B cell (primary cell): ENCODE measurements at regions of chr5 and their contacts with region 1.

Region 1: DNA sequence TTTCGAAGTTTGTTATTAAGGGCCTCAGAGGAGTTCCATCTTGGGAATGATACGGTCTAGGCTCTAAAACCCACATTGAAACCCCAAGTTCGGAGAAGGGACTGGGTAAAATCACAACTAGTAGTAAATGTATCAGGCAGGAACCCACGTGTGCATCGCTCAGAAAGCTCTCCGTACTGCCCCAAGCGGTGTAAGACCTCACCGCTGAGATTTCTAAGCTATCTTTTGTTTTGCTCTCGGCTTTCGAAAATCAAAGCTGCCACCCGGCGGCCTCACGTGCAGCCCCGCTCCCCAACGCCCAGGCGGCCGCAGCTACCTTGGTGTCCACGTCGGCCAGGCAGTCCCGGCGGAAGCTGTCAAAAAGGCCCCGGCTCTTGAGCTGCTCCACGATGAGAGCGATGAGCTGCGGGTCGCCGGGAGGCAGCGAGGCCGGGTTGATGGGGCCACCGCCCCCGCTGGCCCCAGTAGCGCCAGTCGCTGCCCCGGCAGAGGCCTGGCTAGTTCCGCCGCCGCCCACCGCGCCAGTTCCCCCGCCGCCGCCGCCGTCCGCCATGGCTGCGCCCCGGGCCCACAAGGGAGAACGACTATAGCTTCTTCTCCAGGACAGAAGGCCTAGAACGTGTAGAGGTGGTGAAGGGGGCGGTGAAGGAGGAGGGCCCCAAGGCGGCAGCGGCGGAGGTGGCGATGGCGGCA is 420 bp downstream of the BOD1 start:
- DNase-seq: peak; percentile 87
- ATAC-seq: peak; percentile 34
- H3K4me3 ChIP-seq: peak overlapping the region; percentile 68 to 89 (median 83)
- H3K4me3 Mint-ChIP-seq: peak overlapping the region; percentile 98
- H3K27ac ChIP-seq: peak overlapping the region; percentile 88 to 96
- H3K27ac Mint-ChIP-seq: peak overlapping the region; percentile 97
- H3K4me1 ChIP-seq: peaks cover 21 to 29% of the 10 kb centered on the region in 2 donors
- H3K4me1 Mint-ChIP-seq: peaks cover 43% of the 10 kb centered on the region
- H3K27me3 ChIP-seq: no peaks in the 10 kb centered on the region
- H3K27me3 Mint-ChIP-seq: no peaks in the 10 kb centered on the region
- CTCF ChIP-seq: peak; percentile 77

Region 2: DNA sequence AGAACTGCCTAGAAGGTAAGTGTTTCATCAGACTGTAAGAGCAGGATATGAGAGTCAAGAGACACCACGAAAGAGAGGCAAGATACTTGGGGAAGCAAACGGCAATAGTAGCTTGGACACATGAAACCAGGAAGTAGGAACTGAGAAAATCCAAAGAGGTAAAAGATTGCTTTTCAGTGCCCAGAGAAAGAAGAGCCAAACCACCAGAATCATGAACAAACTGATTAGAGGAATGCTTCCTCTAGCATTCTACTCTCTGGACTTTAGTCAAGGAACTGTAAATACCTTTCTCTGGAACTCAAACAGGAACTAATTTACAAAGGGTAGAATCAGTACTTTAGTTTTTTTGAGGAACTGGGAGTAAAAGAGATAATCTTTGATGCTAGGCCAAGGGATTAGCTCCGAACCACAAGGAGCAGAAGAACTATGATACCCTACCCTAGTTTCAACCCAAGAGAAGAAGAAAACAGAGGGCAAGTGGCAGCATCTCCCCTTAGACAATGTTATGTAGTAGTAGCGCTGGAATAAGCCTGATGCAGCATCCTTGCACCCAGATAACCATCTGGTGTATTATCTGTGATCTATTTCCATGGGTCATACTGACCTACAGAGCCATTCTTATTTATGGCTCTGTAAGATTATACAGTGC is 1380.8 kb before region 1 on chr5:
- CTCF ChIA-PET with region 1: no interaction called
- POLR2A ChIA-PET with region 1: no interaction called
- intact Hi-C with region 1: no loop called
- DNase-seq: peak; percentile 5
- ATAC-seq: no peak
- H3K4me3 ChIP-seq: no peak overlapping the region
- H3K4me3 Mint-ChIP-seq: no peak overlapping the region
- H3K27ac ChIP-seq: peak overlapping the region in 1 of 2 donors; percentile 3
- H3K27ac Mint-ChIP-seq: no peak overlapping the region
- H3K4me1 ChIP-seq: peaks cover 0 to 7% of the 10 kb centered on the region in 2 donors
- H3K4me1 Mint-ChIP-seq: peaks cover 17% of the 10 kb centered on the region
- H3K27me3 ChIP-seq: no peaks in the 10 kb centered on the region
- H3K27me3 Mint-ChIP-seq: no peaks in the 10 kb centered on the region
- CTCF ChIP-seq: no peak

Region 3: GRCh38 chr5:172764849-172765765 is 850.9 kb before region 1 on chr5:
- CTCF ChIA-PET with region 1: no interaction called
- POLR2A ChIA-PET with region 1: no interaction called
- intact Hi-C with region 1: loop called (anchors 10 kb)
- DNase-seq: peak; percentile 99
- ATAC-seq: peak; percentile 78
- H3K4me3 ChIP-seq: peak overlapping the region; percentile 27 to 74 (median 52)
- H3K4me3 Mint-ChIP-seq: peak overlapping the region; percentile 83
- H3K27ac ChIP-seq: peak overlapping the region; percentile 92 to 94
- H3K27ac Mint-ChIP-seq: peak overlapping the region; percentile 94
- H3K4me1 ChIP-seq: peaks cover 33 to 42% of the 10 kb centered on the region in 2 donors
- H3K4me1 Mint-ChIP-seq: peaks cover 59% of the 10 kb centered on the region
- H3K27me3 ChIP-seq: no peaks in the 10 kb centered on the region
- H3K27me3 Mint-ChIP-seq: no peaks in the 10 kb centered on the region
- CTCF ChIP-seq: no peak

Region 4: GRCh38 chr5:173293817-173294672 is 322.0 kb before region 1 on chr5:
- CTCF ChIA-PET with region 1: interaction called, 7 read pairs
- POLR2A ChIA-PET with region 1: no interaction called
- intact Hi-C with region 1: loop called (anchors 5 kb)
- DNase-seq: peak; percentile 70
- ATAC-seq: peak; percentile 53
- H3K4me3 ChIP-seq: no peak overlapping the region
- H3K4me3 Mint-ChIP-seq: peak overlapping the region; percentile 8
- H3K27ac ChIP-seq: no peak overlapping the region
- H3K27ac Mint-ChIP-seq: no peak overlapping the region
- H3K4me1 ChIP-seq: peaks cover 11 to 12% of the 10 kb centered on the region in 2 donors
- H3K4me1 Mint-ChIP-seq: peaks cover 10% of the 10 kb centered on the region
- H3K27me3 ChIP-seq: peaks cover 0 to 30% (median 14%) of the 10 kb centered on the region in 4 experiments
- H3K27me3 Mint-ChIP-seq: peaks cover 46% of the 10 kb centered on the region
- CTCF ChIP-seq: peak; percentile 88

Region 5: DNA sequence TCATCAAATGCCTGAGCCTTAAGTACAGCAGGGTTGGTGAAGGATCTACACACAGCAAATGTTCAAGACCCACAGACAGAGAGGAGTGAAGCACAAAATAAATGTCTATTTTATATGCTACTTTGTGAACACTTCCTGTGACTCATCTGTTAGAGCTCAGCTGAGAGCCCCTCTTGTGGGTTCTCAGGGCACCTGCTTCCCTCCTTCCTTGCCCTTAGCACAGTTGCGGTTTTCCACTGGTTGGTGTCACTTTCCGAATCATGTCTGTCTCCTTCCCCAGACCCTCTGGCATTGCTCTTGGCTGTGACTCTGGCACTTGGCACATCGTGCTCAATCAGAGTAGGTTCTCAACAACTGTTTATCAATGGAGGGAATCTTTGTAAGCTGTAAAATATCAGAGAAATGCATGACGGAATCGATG is 159.3 kb before region 1 on chr5:
- CTCF ChIA-PET with region 1: no interaction called
- POLR2A ChIA-PET with region 1: no interaction called
- intact Hi-C with region 1: no loop called
- DNase-seq: no peak
- ATAC-seq: no peak
- H3K4me3 ChIP-seq: no peak overlapping the region
- H3K4me3 Mint-ChIP-seq: no peak overlapping the region
- H3K27ac ChIP-seq: no peak overlapping the region
- H3K27ac Mint-ChIP-seq: no peak overlapping the region
- H3K4me1 ChIP-seq: no peaks in the 10 kb centered on the region
- H3K4me1 Mint-ChIP-seq: no peaks in the 10 kb centered on the region
- H3K27me3 ChIP-seq: no peaks in the 10 kb centered on the region
- H3K27me3 Mint-ChIP-seq: peaks cover 10% of the 10 kb centered on the region
- CTCF ChIP-seq: no peak

Region 6: DNA sequence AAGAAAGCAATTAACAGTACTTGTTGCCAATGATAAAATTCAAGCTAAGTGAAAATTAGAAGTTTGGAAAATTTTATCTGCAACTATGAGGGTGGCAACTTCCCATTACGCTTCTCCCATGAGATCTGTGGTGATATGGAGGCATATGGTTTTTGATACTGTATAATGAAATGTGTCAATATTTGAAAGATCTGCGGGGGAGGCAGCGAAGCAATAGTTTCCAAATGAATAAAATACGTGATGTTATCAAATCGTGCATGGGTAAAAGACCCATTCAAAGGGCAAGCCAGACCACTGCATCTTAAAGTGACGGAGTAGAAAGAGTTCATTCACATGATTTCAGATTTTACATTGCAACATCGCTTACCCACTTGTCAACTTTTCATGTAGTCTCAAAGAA is 21.3 kb after region 1 on chr5:
- CTCF ChIA-PET with region 1: no interaction called
- POLR2A ChIA-PET with region 1: no interaction called
- intact Hi-C with region 1: no loop called
- DNase-seq: no peak
- ATAC-seq: no peak
- H3K4me3 ChIP-seq: no peak overlapping the region
- H3K4me3 Mint-ChIP-seq: no peak overlapping the region
- H3K27ac ChIP-seq: no peak overlapping the region
- H3K27ac Mint-ChIP-seq: no peak overlapping the region
- H3K4me1 ChIP-seq: peaks cover 0 to 3% of the 10 kb centered on the region in 2 donors
- H3K4me1 Mint-ChIP-seq: peaks cover 3% of the 10 kb centered on the region
- H3K27me3 ChIP-seq: no peaks in the 10 kb centered on the region
- H3K27me3 Mint-ChIP-seq: no peaks in the 10 kb centered on the region
- CTCF ChIP-seq: no peak

Region 7: DNA sequence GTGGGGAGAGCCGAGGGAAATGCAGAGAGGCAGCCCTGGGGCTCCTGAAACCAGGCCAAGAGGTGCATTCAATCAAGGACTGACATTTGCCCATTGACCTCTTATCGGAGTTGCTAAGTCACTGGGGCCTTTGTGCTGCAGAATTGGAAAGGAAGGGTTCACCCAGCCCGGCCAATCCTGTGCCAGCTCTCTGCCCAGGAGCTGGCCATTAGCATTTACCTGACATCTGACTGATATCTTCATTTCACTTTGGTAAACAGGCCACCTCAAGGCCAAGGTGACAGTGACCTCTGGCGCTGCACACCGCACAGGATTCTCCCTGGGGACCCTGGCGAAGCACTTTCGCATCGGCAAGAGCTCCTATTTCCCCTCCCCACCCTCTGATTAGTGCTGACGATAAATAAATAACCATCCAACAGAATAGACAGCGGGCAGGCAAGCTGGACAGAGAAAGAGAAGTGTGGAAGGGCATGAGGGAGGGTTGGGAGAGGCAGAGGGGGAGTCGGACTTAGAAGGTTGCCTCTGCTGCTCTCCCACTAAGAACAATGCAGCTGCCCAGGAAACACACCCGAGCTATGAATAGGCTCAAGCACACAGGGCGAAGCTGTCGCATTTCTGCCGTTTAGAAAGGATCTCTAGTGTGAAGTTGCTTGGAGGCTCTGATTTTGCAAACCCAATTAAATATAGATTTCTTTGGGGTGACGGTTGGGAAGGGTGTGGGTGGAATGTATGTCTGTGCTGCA is 57.5 kb after region 1 on chr5:
- CTCF ChIA-PET with region 1: no interaction called
- POLR2A ChIA-PET with region 1: no interaction called
- intact Hi-C with region 1: no loop called
- DNase-seq: no peak
- ATAC-seq: no peak
- H3K4me3 ChIP-seq: no peak overlapping the region
- H3K4me3 Mint-ChIP-seq: no peak overlapping the region
- H3K27ac ChIP-seq: no peak overlapping the region
- H3K27ac Mint-ChIP-seq: no peak overlapping the region
- H3K4me1 ChIP-seq: no peaks in the 10 kb centered on the region
- H3K4me1 Mint-ChIP-seq: peaks cover 11% of the 10 kb centered on the region
- H3K27me3 ChIP-seq: no peaks in the 10 kb centered on the region
- H3K27me3 Mint-ChIP-seq: peaks cover 4% of the 10 kb centered on the region
- CTCF ChIP-seq: no peak

Region 8: GRCh38 chr5:173781814-173782670 is 166.0 kb after region 1 on chr5:
- CTCF ChIA-PET with region 1: interaction called, 12 read pairs
- POLR2A ChIA-PET with region 1: no interaction called
- intact Hi-C with region 1: loop called (anchors 5 kb)
- DNase-seq: peak; percentile 89
- ATAC-seq: peak; percentile 79
- H3K4me3 ChIP-seq: peak overlapping the region in 1 of 5 experiments; percentile 15
- H3K4me3 Mint-ChIP-seq: peak overlapping the region; percentile 69
- H3K27ac ChIP-seq: peak overlapping the region; percentile 56 to 68
- H3K27ac Mint-ChIP-seq: peak overlapping the region; percentile 90
- H3K4me1 ChIP-seq: peaks cover 47 to 59% of the 10 kb centered on the region in 2 donors
- H3K4me1 Mint-ChIP-seq: peaks cover 63% of the 10 kb centered on the region
- H3K27me3 ChIP-seq: no peaks in the 10 kb centered on the region
- H3K27me3 Mint-ChIP-seq: no peaks in the 10 kb centered on the region
- CTCF ChIP-seq: no peak

Region 9: DNA sequence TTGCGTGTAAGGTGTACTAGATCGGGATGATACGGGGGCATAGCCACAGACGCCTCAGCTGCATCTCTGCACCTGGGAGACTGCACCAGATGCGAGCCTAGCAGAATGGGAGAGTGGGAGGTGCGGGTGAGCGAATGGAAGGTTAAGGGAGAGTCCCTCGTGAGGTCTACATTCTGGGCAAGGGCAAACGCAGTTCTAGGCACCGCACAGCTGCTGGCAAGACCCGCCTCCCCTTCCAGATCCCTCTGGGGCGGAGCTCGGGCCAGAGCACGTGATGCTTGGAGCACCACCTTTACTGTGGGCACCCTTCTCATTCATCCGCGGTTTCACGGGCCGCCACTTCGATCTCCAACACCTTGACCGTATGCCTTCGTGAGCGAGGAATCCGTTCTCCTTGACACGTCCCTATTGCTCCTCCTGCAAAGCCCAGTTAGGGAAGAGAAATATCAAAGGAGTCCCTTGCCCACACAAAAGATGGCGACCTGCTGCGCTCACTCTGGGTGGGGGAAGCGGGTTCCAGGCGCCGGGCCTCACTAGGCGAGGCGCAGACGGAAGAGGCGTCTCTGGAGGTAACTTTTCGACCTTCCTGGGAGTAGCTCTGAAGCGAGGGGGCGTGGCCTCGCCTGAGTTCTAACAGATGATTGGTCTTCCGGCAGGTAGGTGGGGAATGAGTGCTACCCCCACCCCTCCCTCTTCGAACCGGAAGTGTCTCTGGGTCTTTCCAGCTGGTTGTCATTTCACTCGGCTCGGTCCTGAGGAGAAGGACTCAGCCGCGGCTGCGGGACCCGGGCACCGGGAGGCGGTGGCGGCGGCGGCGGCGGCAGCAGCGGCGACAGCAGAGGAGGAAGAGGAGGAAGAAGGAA is 271.8 kb after region 1 on chr5 and contains the start of gene CPEB4:
- CTCF ChIA-PET with region 1: interaction called, 60 read pairs
- POLR2A ChIA-PET with region 1: interaction called, 6 read pairs
- intact Hi-C with region 1: loop called (anchors 1 kb)
- DNase-seq: peak; percentile 99
- ATAC-seq: peak; percentile 89
- H3K4me3 ChIP-seq: peak within 1 kb of the TSS; percentile 75 to 96 (median 88)
- H3K4me3 Mint-ChIP-seq: peak within 1 kb of the TSS; percentile 95
- H3K27ac ChIP-seq: peak within 1 kb of the TSS; percentile 84 to 92
- H3K27ac Mint-ChIP-seq: peak within 1 kb of the TSS; percentile 99
- H3K4me1 ChIP-seq: peaks cover 62 to 66% of the 10 kb centered on the region in 2 donors
- H3K4me1 Mint-ChIP-seq: peaks cover 87% of the 10 kb centered on the region
- H3K27me3 ChIP-seq: no peaks in the 10 kb centered on the region
- H3K27me3 Mint-ChIP-seq: no peaks in the 10 kb centered on the region
- CTCF ChIP-seq: no peak
- total RNA-seq, gene CPEB4: 26.0 and 28.2 TPM in 2 replicates

Region 10: DNA sequence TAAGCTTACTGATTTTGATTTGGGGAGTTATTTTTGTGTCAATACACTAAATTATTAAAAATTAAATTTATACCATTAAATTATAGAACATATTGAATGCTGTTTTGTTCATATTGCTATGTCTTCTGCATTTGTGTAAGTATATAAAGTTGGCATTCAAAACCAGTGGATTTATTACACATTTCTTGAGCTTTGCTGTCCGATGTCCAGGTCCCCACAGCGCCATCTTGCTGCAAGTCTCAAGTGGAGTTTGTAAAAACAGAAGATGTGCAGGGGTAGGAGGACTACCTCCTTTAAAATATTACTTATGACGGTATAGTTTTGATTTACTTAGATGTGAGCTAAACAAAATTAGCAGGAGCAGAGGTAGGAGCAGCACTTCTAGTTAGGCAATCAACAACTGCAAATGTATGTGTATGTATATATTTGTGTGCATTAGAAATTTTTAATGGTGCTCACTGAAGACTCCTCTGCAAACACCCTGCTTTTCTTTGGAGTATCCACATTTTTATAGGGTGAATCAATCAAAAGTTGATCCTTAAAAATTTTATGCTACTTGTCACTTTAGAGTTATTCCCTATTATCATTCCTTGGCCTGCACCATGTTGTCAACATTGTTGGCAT is 309.5 kb after region 1 on chr5:
- CTCF ChIA-PET with region 1: interaction called, 201 read pairs
- POLR2A ChIA-PET with region 1: no interaction called
- intact Hi-C with region 1: loop called (anchors 1 kb)
- DNase-seq: peak; percentile 68
- ATAC-seq: no peak
- H3K4me3 ChIP-seq: no peak overlapping the region
- H3K4me3 Mint-ChIP-seq: no peak overlapping the region
- H3K27ac ChIP-seq: no peak overlapping the region
- H3K27ac Mint-ChIP-seq: no peak overlapping the region
- H3K4me1 ChIP-seq: peaks cover 6 to 8% of the 10 kb centered on the region in 2 donors
- H3K4me1 Mint-ChIP-seq: peaks cover 27% of the 10 kb centered on the region
- H3K27me3 ChIP-seq: no peaks in the 10 kb centered on the region
- H3K27me3 Mint-ChIP-seq: no peaks in the 10 kb centered on the region
- CTCF ChIP-seq: peak; percentile 74

Region 11: GRCh38 chr5:173984218-173984617 is 368.2 kb after region 1 on chr5:
- CTCF ChIA-PET with region 1: interaction called, 22 read pairs
- POLR2A ChIA-PET with region 1: no interaction called
- intact Hi-C with region 1: no loop called
- DNase-seq: no peak
- ATAC-seq: no peak
- H3K4me3 ChIP-seq: no peak overlapping the region
- H3K4me3 Mint-ChIP-seq: no peak overlapping the region
- H3K27ac ChIP-seq: no peak overlapping the region
- H3K27ac Mint-ChIP-seq: no peak overlapping the region
- H3K4me1 ChIP-seq: no peaks in the 10 kb centered on the region
- H3K4me1 Mint-ChIP-seq: no peaks in the 10 kb centered on the region
- H3K27me3 ChIP-seq: peaks cover 0 to 20% (median 9%) of the 10 kb centered on the region in 4 experiments
- H3K27me3 Mint-ChIP-seq: peaks cover 51% of the 10 kb centered on the region
- CTCF ChIP-seq: no peak